Sciatic nerve (tissue), 2 donors: ENCODE measurements at regions of chr21 and their contacts with region 1.

Region 1: GRCh38 chr21:32257962-32258785 is 20.7 kb downstream of the MIS18A start:
- DNase-seq: peak; percentile 83
- ATAC-seq: peak; percentile 92

Region 2: DNA sequence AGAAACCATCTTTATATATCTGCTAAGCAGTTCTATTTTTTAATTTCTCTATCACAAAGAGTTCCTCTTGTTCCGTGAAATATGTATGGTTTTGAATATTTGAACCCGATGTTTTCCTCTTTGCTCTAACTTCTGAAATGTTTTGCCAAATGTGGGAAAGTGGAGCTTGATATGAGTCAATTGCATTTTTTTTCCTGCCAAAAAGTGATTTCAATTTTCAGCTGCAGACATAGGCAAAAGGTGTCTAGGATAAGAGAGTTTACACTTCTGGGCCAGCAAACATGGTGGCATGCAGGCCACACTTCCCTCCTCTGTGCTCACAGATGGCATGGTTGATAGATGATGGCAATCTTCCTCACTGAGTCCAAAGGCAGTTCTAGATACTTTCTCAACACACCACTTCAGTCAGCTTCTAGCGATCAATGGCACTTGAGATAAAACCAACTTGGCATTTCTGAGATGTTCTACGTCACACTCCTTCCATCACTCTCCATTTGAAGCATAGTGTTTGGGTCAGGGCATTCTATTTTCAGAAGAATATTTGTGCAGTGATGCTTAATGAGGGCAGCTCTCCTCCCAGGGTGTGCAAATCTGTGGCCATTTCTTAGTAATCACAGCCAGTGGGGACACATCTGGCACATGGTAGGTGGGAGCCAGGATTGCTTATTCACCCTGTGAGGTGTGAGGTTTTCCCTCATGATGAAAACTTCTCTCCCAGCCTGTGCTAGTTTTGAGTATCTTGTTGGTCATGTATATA is 471.8 kb before region 1 on chr21:
- intact Hi-C with region 1: loop called (anchors 5 kb)
- DNase-seq: no peak
- ATAC-seq: no peak

Region 3: DNA sequence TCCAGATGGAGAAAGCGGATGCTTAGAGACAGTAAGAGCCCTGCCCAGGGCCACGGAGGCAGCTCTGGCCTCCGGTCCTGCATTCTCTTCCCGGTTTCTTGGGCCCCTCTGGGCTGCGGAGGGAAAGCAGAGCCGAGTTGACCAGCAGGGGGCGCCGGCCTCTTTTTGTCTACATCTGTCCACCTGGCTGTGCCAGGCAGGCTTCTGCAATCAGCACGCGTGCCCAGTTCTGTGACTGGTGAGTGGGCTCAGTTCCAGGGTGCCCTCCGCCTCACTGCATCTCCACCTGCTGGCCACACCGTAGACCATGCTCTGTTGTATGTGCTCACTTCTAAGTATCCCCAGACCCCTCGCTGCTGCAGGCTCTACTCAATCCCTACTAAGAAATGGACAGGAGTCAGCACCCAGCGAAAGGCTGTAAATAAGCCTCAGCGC is 392.1 kb before region 1 on chr21:
- intact Hi-C with region 1: loop called (anchors 2 kb)
- DNase-seq: peak; percentile 92
- ATAC-seq: peak; percentile 93